ENCODE measurements at regions of chr16 and their contacts with region 1.

Region 1: GRCh38 chr16:414395-415169 is 10.9 kb upstream of the RAB11FIP3 start:
- DNase-seq: peak; percentile 52
- H3K4me3 ChIP-seq: no peak overlapping the region
- H3K27ac ChIP-seq: no peak overlapping the region
- H3K4me1 ChIP-seq: peaks cover 7% of the 10 kb centered on the region
- H3K27me3 ChIP-seq: no peaks in the 10 kb centered on the region
- CTCF ChIP-seq: no peak

Region 2: DNA sequence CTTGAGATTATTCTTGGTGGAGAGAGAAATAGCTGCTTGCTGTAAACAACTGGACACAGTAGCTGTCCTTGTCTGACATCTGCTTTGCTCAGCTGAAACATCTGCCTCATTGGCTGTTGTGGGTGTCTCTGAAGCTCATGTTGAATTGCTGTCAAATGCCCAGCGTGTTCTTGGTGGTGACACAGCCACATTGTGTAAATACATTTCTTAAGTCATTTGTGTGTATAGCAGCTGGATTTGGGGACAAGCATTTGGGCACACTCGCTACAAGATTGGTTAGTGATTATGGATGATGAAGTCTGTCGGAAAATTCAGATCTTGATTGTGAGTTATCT is 174.7 kb before region 1 on chr16:
- CTCF ChIA-PET with region 1: no interaction called
- dilution Hi-C with region 1: no loop called
- in situ Hi-C with region 1: no loop called
- intact Hi-C with region 1: no loop called
- DNase-seq: no peak
- H3K4me3 ChIP-seq: no peak overlapping the region
- H3K27ac ChIP-seq: no peak overlapping the region
- H3K4me1 ChIP-seq: no peaks in the 10 kb centered on the region
- H3K27me3 ChIP-seq: no peaks in the 10 kb centered on the region
- CTCF ChIP-seq: no peak

Region 3: GRCh38 chr16:456891-457483 is 42.4 kb after region 1 on chr16:
- CTCF ChIA-PET with region 1: no interaction called
- dilution Hi-C with region 1: loop called (anchors 5 kb)
- in situ Hi-C with region 1: no loop called
- intact Hi-C with region 1: no loop called
- DNase-seq: no peak
- H3K4me3 ChIP-seq: no peak overlapping the region
- H3K27ac ChIP-seq: no peak overlapping the region
- H3K4me1 ChIP-seq: no peaks in the 10 kb centered on the region
- H3K27me3 ChIP-seq: no peaks in the 10 kb centered on the region
- CTCF ChIP-seq: no peak

Region 4: DNA sequence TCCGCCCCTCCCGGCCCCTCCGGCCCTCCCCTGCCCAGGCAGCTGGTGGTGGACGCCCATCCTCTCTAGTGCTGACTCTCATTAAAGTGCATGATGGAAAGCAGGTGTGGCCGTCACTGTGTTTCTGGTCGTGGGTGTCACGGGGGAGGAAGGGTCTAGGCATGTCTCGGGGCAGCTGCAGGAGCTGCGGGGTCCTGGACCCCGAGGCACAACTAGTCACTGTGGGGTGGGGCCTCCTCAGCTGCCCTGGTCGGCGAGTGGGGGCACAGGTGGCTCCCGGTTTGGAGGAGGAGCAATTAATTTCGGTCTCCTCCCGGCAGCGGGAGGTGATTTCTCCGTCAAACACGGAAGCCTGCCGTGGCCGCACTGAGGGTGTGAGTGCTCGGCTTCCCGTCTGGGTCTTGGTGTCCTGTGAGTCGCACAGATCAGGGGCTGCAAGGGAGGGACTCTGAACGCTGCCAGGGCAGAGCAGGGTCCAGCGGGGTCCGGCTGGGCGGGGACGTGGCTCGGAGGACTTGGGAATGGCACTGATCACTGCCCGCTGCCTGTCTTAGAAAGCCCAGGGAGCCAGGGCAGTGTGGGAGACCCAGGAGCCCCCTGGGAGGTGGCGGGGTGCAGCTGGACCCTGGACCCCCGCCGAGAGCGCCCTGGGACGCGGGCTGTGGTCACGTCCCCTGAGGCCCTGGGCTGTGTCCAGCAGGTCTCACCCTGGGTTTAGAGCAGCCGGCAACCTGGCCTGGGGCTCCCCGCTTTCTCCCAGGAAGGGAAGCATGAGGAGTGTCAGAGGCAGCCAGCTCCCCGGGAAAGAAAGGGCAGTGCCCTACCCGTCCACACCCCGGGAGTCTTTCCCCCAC is 844.6 kb after region 1 on chr16:
- CTCF ChIA-PET with region 1: no interaction called
- dilution Hi-C with region 1: no loop called
- in situ Hi-C with region 1: no loop called
- intact Hi-C with region 1: no loop called
- DNase-seq: no peak
- H3K4me3 ChIP-seq: peak overlapping the region in 1 of 3 experiments; percentile 14
- H3K27ac ChIP-seq: no peak overlapping the region
- H3K4me1 ChIP-seq: peaks cover 7% of the 10 kb centered on the region
- H3K27me3 ChIP-seq: peaks cover 23% of the 10 kb centered on the region
- CTCF ChIP-seq: no peak